ENCODE measurements at regions of chr2 and their contacts with region 1.

Region 1: GRCh38 chr2:189142893-189143759 is 36.4 kb downstream of the COL5A2 start:
- DNase-seq: peak; percentile 74
- H3K4me3 Mint-ChIP-seq: no peak overlapping the region
- H3K27ac Mint-ChIP-seq: peak overlapping the region; percentile 97
- H3K4me1 Mint-ChIP-seq: peaks cover 17% of the 10 kb centered on the region
- H3K27me3 Mint-ChIP-seq: no peaks in the 10 kb centered on the region
- CTCF ChIP-seq: peak; percentile 75

Region 2: GRCh38 chr2:188598551-188598950 is 544.6 kb before region 1 on chr2:
- CTCF ChIA-PET with region 1: no interaction called
- POLR2A ChIA-PET with region 1: no interaction called
- intact Hi-C with region 1: no loop called
- DNase-seq: no peak
- H3K4me3 Mint-ChIP-seq: no peak overlapping the region
- H3K27ac Mint-ChIP-seq: no peak overlapping the region
- H3K4me1 Mint-ChIP-seq: no peaks in the 10 kb centered on the region
- H3K27me3 Mint-ChIP-seq: no peaks in the 10 kb centered on the region
- CTCF ChIP-seq: no peak

Region 3: DNA sequence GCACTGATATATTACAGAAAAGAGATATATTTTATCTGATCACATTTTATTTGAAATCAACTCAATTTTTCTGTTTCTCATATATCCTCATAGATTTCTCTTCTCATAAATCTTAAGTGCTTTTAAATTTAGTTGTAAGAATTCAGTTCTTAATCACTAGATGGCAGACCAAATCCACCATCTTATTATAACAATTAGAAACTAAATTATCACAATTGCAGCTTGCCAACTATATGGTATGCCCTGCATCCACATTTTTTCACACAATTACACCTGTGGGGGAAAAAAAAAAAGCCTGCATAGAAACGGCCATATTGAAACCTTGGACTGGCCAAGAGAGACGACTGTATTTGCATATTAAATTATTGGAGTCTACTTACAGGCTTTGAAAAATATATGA is 28.0 kb before region 1 on chr2:
- CTCF ChIA-PET with region 1: interaction called, 29 read pairs
- POLR2A ChIA-PET with region 1: interaction called, 5 read pairs
- intact Hi-C with region 1: no loop called
- DNase-seq: peak; percentile 29
- H3K4me3 Mint-ChIP-seq: no peak overlapping the region
- H3K27ac Mint-ChIP-seq: no peak overlapping the region
- H3K4me1 Mint-ChIP-seq: no peaks in the 10 kb centered on the region
- H3K27me3 Mint-ChIP-seq: no peaks in the 10 kb centered on the region
- CTCF ChIP-seq: peak; percentile 50

Region 4: GRCh38 chr2:189129971-189130370 is 13.2 kb before region 1 on chr2:
- CTCF ChIA-PET with region 1: interaction called, 18 read pairs
- POLR2A ChIA-PET with region 1: interaction called, 4 read pairs
- intact Hi-C with region 1: no loop called
- DNase-seq: no peak
- H3K4me3 Mint-ChIP-seq: no peak overlapping the region
- H3K27ac Mint-ChIP-seq: no peak overlapping the region
- H3K4me1 Mint-ChIP-seq: no peaks in the 10 kb centered on the region
- H3K27me3 Mint-ChIP-seq: no peaks in the 10 kb centered on the region
- CTCF ChIP-seq: no peak

Region 5: GRCh38 chr2:189164746-189165145 is 21.6 kb after region 1 on chr2:
- CTCF ChIA-PET with region 1: interaction called, 12 read pairs
- POLR2A ChIA-PET with region 1: interaction called, 3 read pairs
- intact Hi-C with region 1: no loop called
- DNase-seq: peak; percentile 61
- H3K4me3 Mint-ChIP-seq: no peak overlapping the region
- H3K27ac Mint-ChIP-seq: no peak overlapping the region
- H3K4me1 Mint-ChIP-seq: peaks cover 6% of the 10 kb centered on the region
- H3K27me3 Mint-ChIP-seq: no peaks in the 10 kb centered on the region
- CTCF ChIP-seq: no peak

Region 6: DNA sequence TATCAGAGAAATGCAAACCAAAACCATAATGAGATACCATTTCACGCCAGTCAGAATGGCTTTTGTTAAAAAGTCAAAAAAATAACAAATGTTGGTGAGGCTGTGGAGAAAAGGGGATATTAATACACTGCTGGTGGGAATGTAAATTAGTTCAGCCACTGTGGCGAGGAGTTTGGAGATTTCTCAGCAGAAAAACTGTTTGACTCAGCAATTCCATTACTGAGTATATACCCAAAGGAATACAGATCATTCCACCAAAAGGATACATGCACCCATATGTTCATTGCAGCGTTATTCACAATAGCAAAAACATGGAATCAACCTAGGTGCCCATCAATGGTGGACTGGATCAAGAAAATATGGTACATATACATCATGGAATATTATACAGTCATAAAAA is 243.6 kb after region 1 on chr2:
- CTCF ChIA-PET with region 1: no interaction called
- POLR2A ChIA-PET with region 1: no interaction called
- intact Hi-C with region 1: no loop called
- DNase-seq: no peak
- H3K4me3 Mint-ChIP-seq: no peak overlapping the region
- H3K27ac Mint-ChIP-seq: no peak overlapping the region
- H3K4me1 Mint-ChIP-seq: no peaks in the 10 kb centered on the region
- H3K27me3 Mint-ChIP-seq: no peaks in the 10 kb centered on the region
- CTCF ChIP-seq: no peak

Measured in MCF 10A (cell line).